ENCODE measurements at regions of chr17 and their contacts with region 1.

Region 1: DNA sequence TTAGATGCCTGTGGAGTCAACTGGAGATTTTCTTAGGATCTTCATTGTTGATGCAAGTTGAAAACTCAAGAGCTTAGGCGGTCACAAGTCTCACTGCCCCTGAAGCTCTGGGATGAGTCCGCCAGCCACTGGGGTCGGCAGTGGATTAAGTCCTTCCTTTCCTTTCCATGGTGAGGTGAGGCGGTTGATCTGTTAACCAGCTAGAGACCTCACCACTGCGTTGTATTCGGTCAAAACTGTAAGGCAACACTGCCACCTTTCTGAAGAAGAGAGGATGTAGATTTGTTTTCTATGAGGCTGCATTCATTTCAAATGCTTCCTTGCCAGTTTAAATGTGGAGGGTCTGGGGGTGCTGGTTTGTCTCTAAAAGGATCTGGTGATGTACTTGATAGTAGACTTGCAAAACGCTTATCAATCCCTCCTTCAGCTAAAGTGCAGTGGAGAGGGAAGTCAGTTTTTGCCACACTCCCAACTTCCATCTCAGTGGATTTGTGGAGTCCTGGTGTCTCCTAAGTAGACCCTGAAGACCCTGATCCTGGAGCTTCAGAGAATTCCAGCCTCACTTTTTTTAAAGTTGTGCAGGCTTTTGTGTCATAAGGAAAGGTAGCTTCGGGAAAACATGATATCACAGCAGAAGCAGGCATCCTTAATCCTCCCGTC is 1.7 kb downstream of the MYOCD start:
- DNase-seq: no peak
- ATAC-seq: peak; percentile 74

Region 2: DNA sequence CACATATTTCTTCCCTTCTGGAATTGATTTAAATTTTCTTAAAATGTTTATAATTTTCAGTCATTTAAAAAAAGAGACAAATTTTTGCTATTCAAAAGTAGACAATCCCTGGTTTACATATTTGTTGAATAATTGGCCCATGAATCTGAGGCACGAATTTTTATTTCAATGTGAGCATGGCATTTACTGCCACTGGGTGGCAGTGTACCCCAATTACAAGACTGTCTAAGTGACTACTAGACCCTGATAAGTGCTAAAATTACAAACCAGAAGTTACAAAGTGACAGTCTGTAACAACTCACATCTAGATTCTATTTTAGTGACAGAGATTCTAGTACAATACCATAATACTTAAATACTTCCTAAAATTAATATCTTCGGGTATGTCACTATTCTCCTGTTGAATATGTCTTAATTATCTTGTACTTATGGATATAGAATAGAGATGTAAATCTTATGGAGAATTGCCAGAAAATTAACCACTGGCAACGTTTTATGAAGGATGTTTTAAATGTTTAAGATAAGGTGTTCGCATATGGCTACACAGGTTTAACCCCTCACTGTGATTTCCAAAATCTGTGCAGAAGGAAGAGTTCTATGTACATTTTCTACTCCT is 410.9 kb before region 1 on chr17:
- intact Hi-C with region 1: loop called (anchors 10 kb)
- DNase-seq: peak; percentile 29
- ATAC-seq: peak; percentile 80

Region 3: GRCh38 chr17:12545877-12546513 is 121.4 kb before region 1 on chr17:
- intact Hi-C with region 1: loop called (anchors 5 kb)
- DNase-seq: no peak
- ATAC-seq: peak; percentile 85

Region 4: DNA sequence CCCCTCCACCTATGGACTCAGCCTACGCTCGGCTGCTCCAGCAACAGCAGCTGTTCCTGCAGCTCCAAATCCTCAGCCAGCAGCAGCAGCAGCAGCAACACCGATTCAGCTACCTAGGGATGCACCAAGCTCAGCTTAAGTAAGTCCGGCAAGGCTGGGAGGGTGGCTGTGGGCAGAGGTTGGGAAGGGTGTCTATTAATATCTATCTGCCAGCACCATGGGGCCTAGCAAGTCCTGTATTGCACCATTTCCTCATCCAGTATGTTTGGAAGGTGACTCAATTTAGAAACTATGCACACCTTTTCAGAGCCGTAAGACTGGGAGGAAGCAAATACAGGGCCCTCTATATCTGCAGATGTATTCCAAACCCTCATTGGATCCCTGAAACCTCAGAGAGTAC is 76.9 kb after region 1 on chr17:
- intact Hi-C with region 1: loop called (anchors 5 kb)
- DNase-seq: peak; percentile 68
- ATAC-seq: peak; percentile 94